PC-9 (cell line): ENCODE measurements at regions of chr17 and their contacts with region 1.

Region 1: GRCh38 chr17:27407916-27408846 is 48.1 kb upstream of the KSR1 start:
- DNase-seq: peak; percentile 43 to 53
- H3K4me3 ChIP-seq: no peak overlapping the region
- H3K27ac ChIP-seq: no peak overlapping the region
- H3K4me1 ChIP-seq: peaks cover 9% of the 10 kb centered on the region; the same call in 1 of the 2 replicates
- H3K27me3 ChIP-seq: no peaks in the 10 kb centered on the region
- CTCF ChIP-seq: no peak

Region 2: GRCh38 chr17:27345141-27345904 is 62.9 kb before region 1 on chr17:
- CTCF ChIA-PET with region 1: no interaction called
- POLR2A ChIA-PET with region 1: no interaction called
- intact Hi-C with region 1: no loop called
- DNase-seq: no peak
- H3K4me3 ChIP-seq: no peak overlapping the region
- H3K27ac ChIP-seq: no peak overlapping the region
- H3K4me1 ChIP-seq: peaks cover 8% of the 10 kb centered on the region
- H3K27me3 ChIP-seq: no peaks in the 10 kb centered on the region
- CTCF ChIP-seq: no peak

Region 3: GRCh38 chr17:27609611-27610303 is 201.6 kb after region 1 on chr17:
- CTCF ChIA-PET with region 1: interaction called, 13 read pairs
- POLR2A ChIA-PET with region 1: no interaction called
- intact Hi-C with region 1: no loop called
- DNase-seq: peak in 1 of 2 experiments; percentile 25
- H3K4me3 ChIP-seq: no peak overlapping the region
- H3K27ac ChIP-seq: no peak overlapping the region
- H3K4me1 ChIP-seq: peaks cover 1% of the 10 kb centered on the region
- H3K27me3 ChIP-seq: no peaks in the 10 kb centered on the region
- CTCF ChIP-seq: peak; percentile 69